GM12878 (cell line): ENCODE measurements at regions of chr1 and their contacts with region 1.

Region 1: GRCh38 chr1:167220537-167221125 is at the start of gene POU2F1:
- DNase-seq: peak; percentile 94
- ATAC-seq: peak; percentile 81
- H3K4me3 ChIP-seq: peak within 1 kb of the TSS; percentile 92
- H3K27ac ChIP-seq: peak within 1 kb of the TSS; percentile 98
- H3K4me1 ChIP-seq: peaks cover 10% of the 10 kb centered on the region; the same call in 1 of the 2 replicates
- H3K27me3 ChIP-seq: no peaks in the 10 kb centered on the region
- CTCF ChIP-seq: peak; percentile 64 to 81 (median 78)
- EP300 ChIP-seq: no peak
- POLR2A ChIP-seq: no peak; the same call in 1 of the 2 replicates
- RAD21 ChIP-seq: peak; percentile 63
- polyA plus RNA-seq, gene POU2F1: 2.5 to 4.6 TPM

Region 2: DNA sequence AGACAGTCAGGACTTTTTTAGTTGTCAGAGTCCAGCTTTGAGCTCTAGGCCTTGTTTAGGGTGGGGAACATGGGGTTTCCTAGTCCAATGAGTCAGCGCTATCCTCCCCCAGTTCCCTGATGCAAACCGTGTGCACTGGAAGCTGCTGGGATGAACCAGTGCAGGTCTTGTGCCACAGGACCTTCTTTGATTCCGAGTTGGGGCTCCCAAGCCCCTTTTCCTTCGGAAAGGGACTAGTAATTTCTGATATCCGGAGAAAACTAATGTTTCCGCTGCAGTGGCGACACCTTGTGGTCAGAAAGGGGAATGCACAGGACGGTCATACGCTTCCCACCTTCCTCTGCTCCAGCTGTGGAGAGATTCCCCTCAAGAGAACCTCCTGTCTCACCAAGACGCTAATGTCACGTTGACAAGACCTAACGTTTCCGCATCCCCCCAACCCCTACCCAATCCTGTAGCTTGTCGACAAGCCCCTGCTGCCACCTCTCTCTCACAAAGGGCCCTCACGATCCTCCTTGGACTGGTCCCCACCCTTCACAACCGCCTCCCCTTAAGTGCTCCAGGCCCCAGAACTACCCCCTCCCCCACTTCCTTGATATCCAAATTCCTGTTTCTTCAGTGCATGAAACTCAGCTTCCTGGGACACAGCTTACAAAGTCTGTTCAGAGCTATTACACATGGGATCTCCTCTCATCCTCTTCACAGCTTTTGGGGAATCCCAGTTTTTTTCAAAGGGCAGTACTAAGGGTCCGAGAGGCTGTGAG is 161.4 kb before region 1 on chr1:
- CTCF ChIA-PET with region 1: interaction called, 14 read pairs
- POLR2A ChIA-PET with region 1: interaction called, 4 read pairs
- RAD21 ChIA-PET with region 1: interaction called, 5 read pairs
- SMC1A ChIA-PET with region 1: interaction called, 19 read pairs
- in situ Hi-C with region 1: no loop called
- intact Hi-C with region 1: no loop called
- DNase-seq: no peak
- ATAC-seq: peak; percentile 75
- H3K4me3 ChIP-seq: no peak overlapping the region
- H3K27ac ChIP-seq: no peak overlapping the region
- H3K4me1 ChIP-seq: 0 out of 2 replicates have a peak, but pooled peaks cover 3% of the 10 kb centered on the region
- H3K27me3 ChIP-seq: no peaks in the 10 kb centered on the region
- CTCF ChIP-seq: peak; percentile 87 to 90 (median 88)
- EP300 ChIP-seq: no peak
- POLR2A ChIP-seq: no peak
- RAD21 ChIP-seq: peak; percentile 85

Region 3: GRCh38 chr1:167196166-167196565 is 24.5 kb before region 1 on chr1:
- CTCF ChIA-PET with region 1: no interaction called
- POLR2A ChIA-PET with region 1: no interaction called
- RAD21 ChIA-PET with region 1: no interaction called
- SMC1A ChIA-PET with region 1: no interaction called
- in situ Hi-C with region 1: no loop called
- intact Hi-C with region 1: no loop called
- DNase-seq: no peak
- ATAC-seq: no peak
- H3K4me3 ChIP-seq: no peak overlapping the region
- H3K27ac ChIP-seq: no peak overlapping the region
- H3K4me1 ChIP-seq: no peaks in the 10 kb centered on the region
- H3K27me3 ChIP-seq: peaks cover 0 to 2% of the 10 kb centered on the region in 2 experiments; a peak in 1 of 4 replicates
- CTCF ChIP-seq: no peak
- EP300 ChIP-seq: no peak
- POLR2A ChIP-seq: no peak
- RAD21 ChIP-seq: no peak

Region 4: GRCh38 chr1:167233373-167233772 is 12.7 kb after region 1 on chr1:
- CTCF ChIA-PET with region 1: interaction called, 16 read pairs
- POLR2A ChIA-PET with region 1: interaction called, 17 read pairs
- RAD21 ChIA-PET with region 1: interaction called, 7 read pairs
- SMC1A ChIA-PET with region 1: interaction called, 19 read pairs
- in situ Hi-C with region 1: no loop called
- intact Hi-C with region 1: no loop called
- DNase-seq: no peak
- ATAC-seq: peak; percentile 17; the same call in 2 of the 3 replicates
- H3K4me3 ChIP-seq: no peak overlapping the region
- H3K27ac ChIP-seq: no peak overlapping the region
- H3K4me1 ChIP-seq: peaks cover 18% of the 10 kb centered on the region
- H3K27me3 ChIP-seq: no peaks in the 10 kb centered on the region
- CTCF ChIP-seq: no peak
- EP300 ChIP-seq: no peak
- POLR2A ChIP-seq: no peak
- RAD21 ChIP-seq: no peak

Region 5: GRCh38 chr1:167328816-167329483 is 108.3 kb after region 1 on chr1:
- CTCF ChIA-PET with region 1: interaction called, 12 read pairs
- POLR2A ChIA-PET with region 1: interaction called, 13 read pairs
- RAD21 ChIA-PET with region 1: interaction called, 13 read pairs
- SMC1A ChIA-PET with region 1: interaction called, 16 read pairs
- in situ Hi-C with region 1: no loop called
- intact Hi-C with region 1: loop called (anchors 2 kb)
- DNase-seq: peak; percentile 84
- ATAC-seq: peak; percentile 77
- H3K4me3 ChIP-seq: peak overlapping the region; percentile 72
- H3K27ac ChIP-seq: peak overlapping the region; percentile 82
- H3K4me1 ChIP-seq: peaks cover 36% of the 10 kb centered on the region
- H3K27me3 ChIP-seq: no peaks in the 10 kb centered on the region
- CTCF ChIP-seq: no peak
- EP300 ChIP-seq: peak; percentile 65 to 83; a peak in 2 of 4 replicates
- POLR2A ChIP-seq: no peak
- RAD21 ChIP-seq: no peak

Region 6: GRCh38 chr1:167467126-167467710 is 246.6 kb after region 1 on chr1:
- CTCF ChIA-PET with region 1: no interaction called
- POLR2A ChIA-PET with region 1: no interaction called
- RAD21 ChIA-PET with region 1: no interaction called
- SMC1A ChIA-PET with region 1: no interaction called
- in situ Hi-C with region 1: no loop called
- intact Hi-C with region 1: no loop called
- DNase-seq: no peak
- ATAC-seq: no peak
- H3K4me3 ChIP-seq: no peak overlapping the region
- H3K27ac ChIP-seq: no peak overlapping the region
- H3K4me1 ChIP-seq: no peaks in the 10 kb centered on the region
- H3K27me3 ChIP-seq: no peaks in the 10 kb centered on the region; a peak in 1 of 4 replicates
- CTCF ChIP-seq: no peak
- EP300 ChIP-seq: no peak
- POLR2A ChIP-seq: no peak
- RAD21 ChIP-seq: no peak

Region 7: GRCh38 chr1:167533851-167534300 is 313.2 kb after region 1 on chr1:
- CTCF ChIA-PET with region 1: interaction called, 6 read pairs
- POLR2A ChIA-PET with region 1: no interaction called
- RAD21 ChIA-PET with region 1: interaction called, 10 read pairs
- SMC1A ChIA-PET with region 1: interaction called, 5 read pairs
- in situ Hi-C with region 1: no loop called
- intact Hi-C with region 1: loop called (anchors 5 kb)
- DNase-seq: no peak
- ATAC-seq: peak; percentile 90
- H3K4me3 ChIP-seq: no peak overlapping the region
- H3K27ac ChIP-seq: no peak overlapping the region
- H3K4me1 ChIP-seq: peaks cover 4% of the 10 kb centered on the region
- H3K27me3 ChIP-seq: no peaks in the 10 kb centered on the region
- CTCF ChIP-seq: peak; percentile 82 to 87 (median 85)
- EP300 ChIP-seq: no peak
- POLR2A ChIP-seq: no peak
- RAD21 ChIP-seq: peak; percentile 85